ENCODE measurements at regions of chr5 and their contacts with region 1.

Region 1: GRCh38 chr5:147223948-147224791 is 10.7 kb upstream of the STK32A start:
- DNase-seq: peak in 1 of 2 donors; percentile 19
- ATAC-seq: peak; percentile 72

Region 2: DNA sequence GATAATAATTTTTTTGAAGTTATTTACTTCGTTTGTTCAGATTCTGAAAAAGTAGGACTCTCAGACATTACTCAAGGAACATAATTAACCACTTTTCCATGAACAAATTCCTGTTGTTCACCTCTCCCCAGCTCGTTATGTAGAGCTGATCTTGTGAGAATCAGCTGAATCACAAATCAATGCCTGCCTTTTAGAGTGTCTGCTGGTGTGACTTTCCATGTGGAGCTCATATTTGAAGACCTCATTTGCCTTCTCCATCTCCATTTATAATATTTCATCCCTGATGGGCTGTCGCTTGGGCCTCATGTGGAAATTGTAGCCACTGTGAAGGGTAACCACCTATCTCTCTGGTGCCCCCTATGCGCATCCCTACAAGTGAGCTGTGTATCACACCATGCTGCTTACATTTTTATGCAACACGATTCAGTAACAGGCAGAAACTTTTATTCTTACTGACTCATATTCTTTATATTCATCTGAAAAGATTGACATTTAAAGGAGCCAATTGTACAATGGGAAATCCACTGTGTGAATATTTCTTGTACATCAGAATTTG is 121.9 kb after region 1 on chr5:
- intact Hi-C with region 1: no loop called
- DNase-seq: no peak
- ATAC-seq: no peak

Region 3: DNA sequence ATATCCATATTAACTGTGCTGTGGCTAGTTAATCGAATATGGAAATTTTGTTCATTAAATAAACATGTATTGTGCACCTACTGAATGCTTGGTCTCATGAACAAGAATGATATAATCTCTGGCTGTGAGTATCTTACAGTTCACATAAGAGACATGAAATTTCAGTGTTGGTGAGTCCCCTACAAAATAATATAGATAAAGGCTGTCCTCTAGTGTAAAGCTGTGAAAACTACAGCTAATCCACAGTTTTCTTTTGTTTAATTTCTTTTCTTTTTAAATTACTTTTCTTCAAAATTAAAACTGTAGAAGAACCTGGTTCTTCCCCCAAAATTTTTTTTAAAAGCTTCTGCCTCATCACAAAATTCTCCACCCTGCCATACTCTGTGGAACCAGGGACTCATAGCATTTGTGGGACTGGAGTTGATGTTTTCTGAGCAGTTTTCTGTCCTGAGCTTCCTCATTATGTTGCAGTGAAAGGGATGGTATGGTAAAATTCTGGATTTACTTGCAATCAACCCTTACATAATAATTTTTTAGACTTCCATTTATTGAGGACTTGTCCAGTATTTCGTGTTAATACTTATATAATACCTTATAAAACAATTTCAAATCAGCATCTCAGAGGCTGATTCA is 145.7 kb after region 1 on chr5:
- intact Hi-C with region 1: loop called in 1 of 2 experiments (anchors 5 kb)
- DNase-seq: no peak
- ATAC-seq: peak; percentile 55

Region 4: GRCh38 chr5:147576646-147577535 is 352.7 kb after region 1 on chr5:
- intact Hi-C with region 1: loop called in 1 of 2 experiments (anchors 5 kb)
- DNase-seq: peak in 1 of 2 donors; percentile 61
- ATAC-seq: peak; percentile 65

Measured in left colon (tissue), 2 donors.